Right ventricle myocardium superior (tissue), 1 donor: ENCODE measurements at regions of chr10 and their contacts with region 1.

Region 1: DNA sequence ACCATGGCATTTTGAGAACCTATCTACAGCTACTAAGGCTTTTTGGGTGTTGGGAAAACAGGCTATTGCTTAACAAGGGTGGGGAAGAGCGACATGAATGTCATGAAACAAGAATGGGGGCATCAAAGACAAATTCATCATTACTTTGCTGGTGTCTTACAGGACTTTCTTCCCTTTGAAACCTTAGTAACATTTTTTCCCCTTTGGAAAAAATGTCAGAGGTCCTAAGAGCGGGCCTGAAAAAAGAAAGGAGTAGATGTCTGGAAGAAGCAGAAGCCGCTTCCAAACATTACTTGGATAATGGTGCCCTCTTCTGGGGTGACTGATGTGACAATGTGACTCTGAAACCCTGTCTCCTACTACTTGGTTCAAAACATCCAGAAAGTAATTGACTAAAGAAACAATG is 3.8 kb upstream of the DDX50 start:
- DNase-seq: no peak
- ATAC-seq: no peak

Region 2: GRCh38 chr10:68550747-68551411 is 346.5 kb before region 1 on chr10:
- intact Hi-C with region 1: loop called (anchors 10 kb)
- DNase-seq: no peak
- ATAC-seq: peak; percentile 78

Region 3: DNA sequence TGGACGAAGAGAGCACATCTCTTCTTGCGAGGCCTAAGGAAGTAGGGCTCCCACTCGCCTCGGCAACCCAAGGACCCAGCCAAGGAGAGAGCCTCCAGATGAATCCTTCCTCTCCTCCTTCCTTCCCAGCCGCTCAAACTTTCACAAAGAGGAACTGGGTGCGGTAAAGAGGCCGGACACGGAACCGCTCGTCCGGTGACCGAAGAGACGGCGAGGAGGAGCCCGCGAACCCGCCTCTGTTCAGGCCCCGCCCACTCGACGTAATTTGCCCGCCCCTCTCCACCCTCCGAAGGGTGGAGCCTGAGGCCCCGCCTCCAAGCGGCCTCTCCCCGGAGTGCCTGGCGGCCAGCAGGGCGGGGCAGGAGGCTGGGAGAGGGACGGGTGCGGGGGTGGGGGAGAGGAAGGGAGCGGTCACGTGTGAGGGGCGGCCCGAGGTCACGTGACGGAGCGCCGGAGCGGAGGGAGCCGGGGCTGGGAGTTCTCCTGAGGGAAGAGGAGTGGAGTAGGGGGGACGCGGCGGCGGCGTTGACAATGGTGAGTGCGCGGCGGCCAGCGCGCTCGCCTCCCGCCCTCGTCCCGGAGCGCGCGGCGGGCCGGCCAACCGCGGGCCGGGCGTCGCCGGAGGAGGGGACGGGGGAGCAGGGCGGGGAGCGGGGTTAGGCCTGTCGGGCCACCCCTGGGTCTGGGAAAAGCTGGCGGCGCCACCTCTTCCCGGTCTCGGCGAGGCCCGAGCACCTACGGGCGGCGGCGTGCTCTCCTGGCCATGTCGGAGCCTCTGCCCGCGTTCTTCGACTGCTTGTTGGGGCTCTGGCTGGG is 226.6 kb after region 1 on chr10 and contains the start of gene VPS26A:
- intact Hi-C with region 1: no loop called
- DNase-seq: peak; percentile 99
- ATAC-seq: peak; percentile 99
- total RNA-seq, gene VPS26A: 34.8 TPM